CD8-positive, alpha-beta memory T cell (primary cell): ENCODE measurements at regions of chr3 and their contacts with region 1.

Region 1: GRCh38 chr3:131033480-131034080 is 6.9 kb downstream of the NEK11 start:
- DNase-seq: peak in 3 of 5 donors; percentile 43 to 55 (median 43)
- H3K4me3 ChIP-seq: no peak overlapping the region
- H3K4me3 Mint-ChIP-seq: no peak overlapping the region
- H3K27ac ChIP-seq: no peak overlapping the region
- H3K27ac Mint-ChIP-seq: no peak overlapping the region
- H3K4me1 ChIP-seq: no peaks in the 10 kb centered on the region
- H3K4me1 Mint-ChIP-seq: no peaks in the 10 kb centered on the region
- H3K27me3 ChIP-seq: no peaks in the 10 kb centered on the region
- H3K27me3 Mint-ChIP-seq: no peaks in the 10 kb centered on the region

Region 2: DNA sequence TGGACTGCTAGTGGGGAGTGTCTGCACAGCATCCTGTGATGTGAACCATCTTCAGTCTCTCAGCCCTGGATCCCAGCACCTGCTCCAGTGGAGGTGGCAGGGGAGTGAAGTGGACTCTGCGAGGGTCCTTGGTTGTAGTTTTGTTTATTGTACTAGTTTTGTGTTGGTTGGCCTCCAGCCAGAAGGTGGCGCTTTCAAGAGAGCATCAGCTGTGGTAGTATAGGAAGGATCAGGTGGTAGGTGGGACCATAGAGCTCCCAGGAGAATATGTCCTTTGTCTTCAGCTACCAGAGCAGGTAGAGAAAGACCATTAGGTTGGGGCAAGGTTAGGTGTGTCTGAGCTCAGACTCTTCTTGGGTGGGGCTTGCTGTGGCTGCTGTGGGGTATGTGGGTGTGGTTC is 14.0 kb after region 1 on chr3:
- CTCF ChIA-PET with region 1: interaction called, 11 read pairs
- POLR2A ChIA-PET with region 1: no interaction called
- DNase-seq: no peak
- H3K4me3 ChIP-seq: no peak overlapping the region
- H3K4me3 Mint-ChIP-seq: no peak overlapping the region
- H3K27ac ChIP-seq: no peak overlapping the region
- H3K27ac Mint-ChIP-seq: no peak overlapping the region
- H3K4me1 ChIP-seq: peaks cover 7% of the 10 kb centered on the region
- H3K4me1 Mint-ChIP-seq: peaks cover 11 to 23% (median 17%) of the 10 kb centered on the region in 3 donors
- H3K27me3 ChIP-seq: no peaks in the 10 kb centered on the region
- H3K27me3 Mint-ChIP-seq: peaks cover 0 to 2% of the 10 kb centered on the region in 2 donors

Region 3: DNA sequence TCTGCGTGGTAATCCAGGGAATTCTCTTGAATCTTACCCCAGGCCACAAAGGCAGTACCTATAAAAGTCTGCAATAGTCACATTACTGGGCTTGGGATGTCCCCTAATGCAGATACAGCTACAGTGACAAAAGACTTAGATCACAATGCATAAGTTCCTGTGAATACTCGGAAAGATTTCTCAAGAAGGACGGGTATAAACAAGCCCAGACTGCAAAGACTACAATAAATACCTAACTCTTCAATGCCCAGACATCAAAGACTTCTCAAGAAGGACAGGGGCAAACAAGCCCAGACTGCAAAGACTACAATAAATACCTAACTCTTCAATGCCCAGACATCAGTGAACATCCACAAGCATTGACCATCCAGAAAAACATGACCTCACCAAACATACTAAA is 398.9 kb after region 1 on chr3:
- CTCF ChIA-PET with region 1: no interaction called
- POLR2A ChIA-PET with region 1: no interaction called
- DNase-seq: no peak
- H3K4me3 ChIP-seq: no peak overlapping the region
- H3K4me3 Mint-ChIP-seq: no peak overlapping the region
- H3K27ac ChIP-seq: no peak overlapping the region
- H3K27ac Mint-ChIP-seq: no peak overlapping the region
- H3K4me1 ChIP-seq: no peaks in the 10 kb centered on the region
- H3K4me1 Mint-ChIP-seq: no peaks in the 10 kb centered on the region
- H3K27me3 ChIP-seq: no peaks in the 10 kb centered on the region
- H3K27me3 Mint-ChIP-seq: peaks cover under 1 to 7% of the 10 kb centered on the region in 2 donors